Caco-2 (cell line): ENCODE measurements at regions of chr5 and their contacts with region 1.

Region 1: GRCh38 chr5:145936401-145937131 is at the start of gene SH3RF2:
- DNase-seq: peak; percentile 83 to 89
- H3K4me3 ChIP-seq: peak within 1 kb of the TSS; percentile 61
- H3K4me3 Mint-ChIP-seq: peak within 1 kb of the TSS; percentile 82
- H3K27ac Mint-ChIP-seq: peak within 1 kb of the TSS; percentile 78
- H3K4me1 ChIP-seq: peaks cover 54% of the 10 kb centered on the region
- H3K4me1 Mint-ChIP-seq: peaks cover 43% of the 10 kb centered on the region
- H3K27me3 ChIP-seq: no peaks in the 10 kb centered on the region
- H3K27me3 Mint-ChIP-seq: no peaks in the 10 kb centered on the region
- CTCF ChIP-seq: no peak
- total RNA-seq, gene SH3RF2: 49.4 and 55.0 TPM in 2 replicates

Region 2: GRCh38 chr5:145834917-145835847 is 101.4 kb before region 1 on chr5 and contains the start of gene PRELID2:
- CTCF ChIA-PET with region 1: no interaction called
- POLR2A ChIA-PET with region 1: interaction called, 12 read pairs
- intact Hi-C with region 1: no loop called
- DNase-seq: peak; percentile 96 to 97
- H3K4me3 ChIP-seq: peak within 1 kb of the TSS; percentile 82
- H3K4me3 Mint-ChIP-seq: peak within 1 kb of the TSS; percentile 72
- H3K27ac Mint-ChIP-seq: peak within 1 kb of the TSS; percentile 79
- H3K4me1 ChIP-seq: peaks cover 19% of the 10 kb centered on the region
- H3K4me1 Mint-ChIP-seq: peaks cover 23% of the 10 kb centered on the region
- H3K27me3 ChIP-seq: no peaks in the 10 kb centered on the region
- H3K27me3 Mint-ChIP-seq: no peaks in the 10 kb centered on the region
- CTCF ChIP-seq: peak; percentile 23 to 24
- total RNA-seq, gene PRELID2: 26.0 and 28.7 TPM in 2 replicates

Region 3: GRCh38 chr5:145908205-145908945 is 28.2 kb before region 1 on chr5:
- CTCF ChIA-PET with region 1: interaction called, 4 read pairs
- POLR2A ChIA-PET with region 1: interaction called, 3 read pairs
- intact Hi-C with region 1: loop called (anchors 1 kb)
- DNase-seq: peak in 1 of 2 experiments; percentile 52
- H3K4me3 ChIP-seq: no peak overlapping the region
- H3K4me3 Mint-ChIP-seq: no peak overlapping the region
- H3K27ac Mint-ChIP-seq: peak overlapping the region; percentile 18
- H3K4me1 ChIP-seq: peaks cover 14% of the 10 kb centered on the region; the same call in 1 of the 2 replicates
- H3K4me1 Mint-ChIP-seq: peaks cover 29% of the 10 kb centered on the region
- H3K27me3 ChIP-seq: no peaks in the 10 kb centered on the region
- H3K27me3 Mint-ChIP-seq: no peaks in the 10 kb centered on the region
- CTCF ChIP-seq: peak; percentile 43 to 69

Region 4: GRCh38 chr5:145925353-145925752 is 11.2 kb before region 1 on chr5:
- CTCF ChIA-PET with region 1: interaction called, 5 read pairs
- POLR2A ChIA-PET with region 1: interaction called, 8 read pairs
- intact Hi-C with region 1: loop called (anchors 1 kb)
- DNase-seq: peak in 1 of 2 experiments; percentile 52
- H3K4me3 ChIP-seq: no peak overlapping the region
- H3K4me3 Mint-ChIP-seq: no peak overlapping the region
- H3K27ac Mint-ChIP-seq: peak overlapping the region; percentile 73
- H3K4me1 ChIP-seq: peaks cover 30% of the 10 kb centered on the region
- H3K4me1 Mint-ChIP-seq: peaks cover 31% of the 10 kb centered on the region
- H3K27me3 ChIP-seq: no peaks in the 10 kb centered on the region
- H3K27me3 Mint-ChIP-seq: no peaks in the 10 kb centered on the region
- CTCF ChIP-seq: no peak

Region 5: DNA sequence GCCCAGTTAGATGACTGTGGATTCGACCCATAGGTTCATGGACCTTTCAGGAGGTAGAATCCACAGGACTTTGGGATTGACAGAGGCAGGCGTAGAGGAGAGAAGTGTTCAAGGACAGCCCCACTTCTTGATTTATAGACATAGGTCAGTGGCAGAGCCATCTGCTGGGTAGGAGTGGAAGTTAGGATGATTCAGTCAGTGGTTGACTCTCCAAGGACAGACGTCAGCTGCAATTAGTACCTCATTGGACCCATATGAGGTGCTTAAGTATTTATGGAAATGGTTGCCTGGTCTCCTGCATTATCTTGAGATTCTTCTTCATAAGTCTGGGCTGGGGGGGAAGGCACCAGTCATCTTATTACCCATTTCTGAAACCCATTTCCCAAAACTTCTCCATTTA is 70.7 kb after region 1 on chr5:
- CTCF ChIA-PET with region 1: no interaction called
- POLR2A ChIA-PET with region 1: no interaction called
- intact Hi-C with region 1: loop called (anchors 2 kb)
- DNase-seq: peak; percentile 19 to 42
- H3K4me3 ChIP-seq: no peak overlapping the region
- H3K4me3 Mint-ChIP-seq: no peak overlapping the region
- H3K27ac Mint-ChIP-seq: no peak overlapping the region
- H3K4me1 ChIP-seq: no peaks in the 10 kb centered on the region; the same call in 1 of the 2 replicates
- H3K4me1 Mint-ChIP-seq: peaks cover 19% of the 10 kb centered on the region
- H3K27me3 ChIP-seq: no peaks in the 10 kb centered on the region
- H3K27me3 Mint-ChIP-seq: no peaks in the 10 kb centered on the region
- CTCF ChIP-seq: peak in 1 of 2 experiments; percentile 29

Region 6: GRCh38 chr5:146032906-146033305 is 96.3 kb after region 1 on chr5:
- CTCF ChIA-PET with region 1: no interaction called
- POLR2A ChIA-PET with region 1: no interaction called
- intact Hi-C with region 1: loop called (anchors 1 kb)
- DNase-seq: peak in 1 of 2 experiments; percentile 39
- H3K4me3 ChIP-seq: no peak overlapping the region
- H3K4me3 Mint-ChIP-seq: no peak overlapping the region
- H3K27ac Mint-ChIP-seq: peak overlapping the region; percentile 24
- H3K4me1 ChIP-seq: peaks cover 39% of the 10 kb centered on the region
- H3K4me1 Mint-ChIP-seq: peaks cover 25% of the 10 kb centered on the region
- H3K27me3 ChIP-seq: no peaks in the 10 kb centered on the region
- H3K27me3 Mint-ChIP-seq: no peaks in the 10 kb centered on the region
- CTCF ChIP-seq: no peak